ENCODE measurements at regions of chr17 and their contacts with region 1.

Region 1: DNA sequence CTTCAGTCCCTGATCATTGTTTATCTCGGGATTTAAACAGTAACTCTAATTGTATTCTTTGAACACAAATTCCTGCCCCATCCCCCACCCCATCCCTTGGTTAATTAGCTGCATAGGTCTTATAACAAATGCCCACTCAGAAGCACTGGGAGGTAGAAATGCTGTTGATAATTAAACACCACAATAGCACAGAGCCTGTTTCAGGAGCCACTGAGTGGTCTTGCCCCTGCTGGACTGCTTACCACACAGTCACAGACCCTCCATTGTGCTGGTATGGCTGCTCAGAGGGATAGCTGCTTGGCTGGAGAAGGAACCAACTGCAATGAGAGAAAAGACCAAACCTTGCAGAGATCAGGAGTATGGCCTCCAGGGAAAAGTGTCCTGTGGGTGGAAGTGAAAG is 214.1 kb downstream of the ANKFN1 start:
- DNase-seq: no peak
- ATAC-seq: no peak
- H3K4me3 ChIP-seq: no peak overlapping the region
- H3K27ac ChIP-seq: no peak overlapping the region
- H3K4me1 ChIP-seq: no peaks in the 10 kb centered on the region
- H3K27me3 ChIP-seq: no peaks in the 10 kb centered on the region
- CTCF ChIP-seq: no peak
- POLR2A ChIP-seq: no peak

Region 2: DNA sequence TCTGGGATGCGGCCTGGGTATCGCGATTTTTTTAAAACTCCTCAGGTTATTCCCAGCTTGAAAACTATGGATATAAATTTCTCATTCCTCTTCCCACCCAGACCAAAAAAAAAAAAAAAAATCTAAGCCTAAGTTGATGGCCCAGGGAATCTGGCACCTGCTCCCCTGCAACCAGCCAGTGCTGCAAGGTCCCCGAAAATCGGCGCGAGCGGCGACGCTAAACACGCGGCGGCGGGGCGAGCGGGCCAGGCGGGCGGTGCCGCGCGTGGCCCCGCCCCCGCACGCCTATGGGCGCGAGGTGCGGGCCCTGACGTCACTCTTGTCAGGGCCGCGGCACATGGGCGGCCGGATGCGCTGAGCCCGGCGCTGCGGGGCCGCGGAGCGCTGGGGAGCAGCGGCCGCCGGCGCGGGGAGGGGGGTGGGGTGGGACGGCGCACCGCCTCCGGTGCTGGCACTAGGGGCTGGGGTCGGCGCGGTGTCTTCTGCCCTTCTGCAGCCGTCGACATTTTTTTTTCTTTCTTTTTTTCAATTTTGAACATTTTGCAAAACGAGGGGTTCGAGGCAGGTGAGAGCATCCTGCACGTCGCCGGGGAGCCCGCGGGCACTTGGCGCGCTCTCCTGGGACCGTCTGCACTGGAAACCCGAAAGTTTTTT is 1102.6 kb before region 1 on chr17 and contains the start of gene HLF:
- intact Hi-C with region 1: no loop called
- DNase-seq: peak; percentile 81 to 90 (median 87)
- ATAC-seq: peak; percentile 86 to 98 (median 93)
- H3K4me3 ChIP-seq: peak within 1 kb of the TSS; percentile 50 to 89 (median 68)
- H3K27ac ChIP-seq: peak within 1 kb of the TSS; percentile 36 to 94 (median 82)
- H3K4me1 ChIP-seq: peaks cover 0 to 52% (median 34%) of the 10 kb centered on the region in 12 donors
- H3K27me3 ChIP-seq: peaks cover 0 to 60% (median 0%) of the 10 kb centered on the region in 9 donors
- CTCF ChIP-seq: no peak
- POLR2A ChIP-seq: peak in 1 of 2 donors; percentile 55
- total RNA-seq, gene HLF: 7.5 to 46.3 (median 28.7) TPM

Region 3: DNA sequence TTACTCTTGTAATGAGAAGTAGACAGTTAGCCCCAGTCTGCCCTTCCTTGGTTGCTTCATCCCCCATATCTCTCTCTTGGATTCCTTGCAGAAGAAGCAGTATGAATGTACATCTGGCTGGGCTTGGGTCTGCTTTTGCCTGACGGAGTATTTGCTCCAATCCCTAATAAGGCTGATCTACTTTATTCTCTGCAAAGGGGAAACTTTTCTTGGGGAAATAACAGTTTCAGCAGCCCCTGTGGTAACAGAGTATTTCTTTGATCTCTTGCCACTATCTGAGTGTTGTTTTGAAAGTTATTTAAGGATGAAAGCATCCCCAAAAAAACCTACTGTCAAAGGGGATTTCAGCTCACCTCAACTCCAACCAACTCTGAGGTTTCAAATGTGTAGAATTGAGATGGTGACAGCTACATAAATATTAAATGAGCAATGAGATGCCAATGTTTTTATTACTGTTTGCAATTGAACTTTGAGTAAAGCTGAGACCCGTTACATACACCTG is 57.2 kb after region 1 on chr17:
- intact Hi-C with region 1: loop called in 1 of 10 experiments (anchors 10 kb)
- DNase-seq: no peak
- ATAC-seq: no peak
- H3K4me3 ChIP-seq: no peak overlapping the region
- H3K27ac ChIP-seq: no peak overlapping the region
- H3K4me1 ChIP-seq: no peaks in the 10 kb centered on the region
- H3K27me3 ChIP-seq: peaks cover 0 to 8% (median 0%) of the 10 kb centered on the region in 9 donors
- CTCF ChIP-seq: no peak
- POLR2A ChIP-seq: no peak

Measured in heart left ventricle (tissue), 16 donors.